ENCODE measurements at regions of chrX and their contacts with region 1.

Region 1: GRCh38 chrX:13051529-13052172 is 7.2 kb upstream of the FAM9C start:
- DNase-seq: peak in 13 of 14 experiments; percentile 30 to 77 (median 55)
- ATAC-seq: peak; percentile 83
- H3K4me3 ChIP-seq: no peak overlapping the region
- H3K4me3 Mint-ChIP-seq: peak overlapping the region; percentile 81
- H3K27ac ChIP-seq: peak overlapping the region; percentile 63 to 78
- H3K27ac Mint-ChIP-seq: peak overlapping the region; percentile 98
- H3K4me1 ChIP-seq: peaks cover 53% of the 10 kb centered on the region
- H3K4me1 Mint-ChIP-seq: peaks cover 82% of the 10 kb centered on the region
- H3K27me3 ChIP-seq: no peaks in the 10 kb centered on the region
- H3K27me3 Mint-ChIP-seq: no peaks in the 10 kb centered on the region
- CTCF ChIP-seq: no peak

Region 2: GRCh38 chrX:12955882-12956703 is 95.6 kb before region 1 on chrX:
- CTCF ChIA-PET with region 1: no interaction called
- POLR2A ChIA-PET with region 1: interaction called, 19 read pairs
- intact Hi-C with region 1: no loop called
- DNase-seq: peak in 11 of 14 experiments; percentile 38 to 84 (median 61)
- ATAC-seq: peak; percentile 18
- H3K4me3 ChIP-seq: peak overlapping the region; percentile 47
- H3K4me3 Mint-ChIP-seq: peak overlapping the region; percentile 89
- H3K27ac ChIP-seq: peak overlapping the region; percentile 87 to 89
- H3K27ac Mint-ChIP-seq: peak overlapping the region; percentile 95
- H3K4me1 ChIP-seq: peaks cover 80% of the 10 kb centered on the region
- H3K4me1 Mint-ChIP-seq: peaks cover 87% of the 10 kb centered on the region
- H3K27me3 ChIP-seq: no peaks in the 10 kb centered on the region
- H3K27me3 Mint-ChIP-seq: no peaks in the 10 kb centered on the region
- CTCF ChIP-seq: no peak

Region 3: GRCh38 chrX:13000301-13000811 is 51.3 kb before region 1 on chrX:
- CTCF ChIA-PET with region 1: no interaction called
- POLR2A ChIA-PET with region 1: interaction called, 23 read pairs
- intact Hi-C with region 1: no loop called
- DNase-seq: peak in 7 of 14 experiments; percentile 35 to 76 (median 60)
- ATAC-seq: peak; percentile 47
- H3K4me3 ChIP-seq: peak overlapping the region; percentile 37
- H3K4me3 Mint-ChIP-seq: peak overlapping the region; percentile 89
- H3K27ac ChIP-seq: peak overlapping the region; percentile 72 to 85
- H3K27ac Mint-ChIP-seq: peak overlapping the region; percentile 90
- H3K4me1 ChIP-seq: peaks cover 56% of the 10 kb centered on the region
- H3K4me1 Mint-ChIP-seq: peaks cover 83% of the 10 kb centered on the region
- H3K27me3 ChIP-seq: no peaks in the 10 kb centered on the region
- H3K27me3 Mint-ChIP-seq: no peaks in the 10 kb centered on the region
- CTCF ChIP-seq: no peak

Region 4: GRCh38 chrX:13013363-13014110 is 38.1 kb before region 1 on chrX:
- CTCF ChIA-PET with region 1: interaction called, 5 read pairs
- POLR2A ChIA-PET with region 1: interaction called, 19 read pairs
- intact Hi-C with region 1: loop called in 1 of 2 experiments (anchors 5 kb)
- DNase-seq: peak in 7 of 14 experiments; percentile 8 to 66 (median 43)
- ATAC-seq: peak; percentile 84
- H3K4me3 ChIP-seq: peak overlapping the region; percentile 9
- H3K4me3 Mint-ChIP-seq: peak overlapping the region; percentile 68
- H3K27ac ChIP-seq: peak overlapping the region; percentile 63 to 66
- H3K27ac Mint-ChIP-seq: peak overlapping the region; percentile 88
- H3K4me1 ChIP-seq: peaks cover 45% of the 10 kb centered on the region
- H3K4me1 Mint-ChIP-seq: peaks cover 76% of the 10 kb centered on the region
- H3K27me3 ChIP-seq: no peaks in the 10 kb centered on the region
- H3K27me3 Mint-ChIP-seq: no peaks in the 10 kb centered on the region
- CTCF ChIP-seq: no peak

Region 5: GRCh38 chrX:13029341-13029740 is 22.3 kb before region 1 on chrX:
- CTCF ChIA-PET with region 1: interaction called, 4 read pairs
- POLR2A ChIA-PET with region 1: interaction called, 85 read pairs
- intact Hi-C with region 1: no loop called
- DNase-seq: peak in 7 of 14 experiments; percentile 9 to 56 (median 40)
- ATAC-seq: peak; percentile 42
- H3K4me3 ChIP-seq: no peak overlapping the region
- H3K4me3 Mint-ChIP-seq: peak overlapping the region; percentile 70
- H3K27ac ChIP-seq: peak overlapping the region; percentile 19 to 52
- H3K27ac Mint-ChIP-seq: peak overlapping the region; percentile 98
- H3K4me1 ChIP-seq: peaks cover 53% of the 10 kb centered on the region
- H3K4me1 Mint-ChIP-seq: peaks cover 83% of the 10 kb centered on the region
- H3K27me3 ChIP-seq: no peaks in the 10 kb centered on the region
- H3K27me3 Mint-ChIP-seq: no peaks in the 10 kb centered on the region
- CTCF ChIP-seq: no peak

Region 6: DNA sequence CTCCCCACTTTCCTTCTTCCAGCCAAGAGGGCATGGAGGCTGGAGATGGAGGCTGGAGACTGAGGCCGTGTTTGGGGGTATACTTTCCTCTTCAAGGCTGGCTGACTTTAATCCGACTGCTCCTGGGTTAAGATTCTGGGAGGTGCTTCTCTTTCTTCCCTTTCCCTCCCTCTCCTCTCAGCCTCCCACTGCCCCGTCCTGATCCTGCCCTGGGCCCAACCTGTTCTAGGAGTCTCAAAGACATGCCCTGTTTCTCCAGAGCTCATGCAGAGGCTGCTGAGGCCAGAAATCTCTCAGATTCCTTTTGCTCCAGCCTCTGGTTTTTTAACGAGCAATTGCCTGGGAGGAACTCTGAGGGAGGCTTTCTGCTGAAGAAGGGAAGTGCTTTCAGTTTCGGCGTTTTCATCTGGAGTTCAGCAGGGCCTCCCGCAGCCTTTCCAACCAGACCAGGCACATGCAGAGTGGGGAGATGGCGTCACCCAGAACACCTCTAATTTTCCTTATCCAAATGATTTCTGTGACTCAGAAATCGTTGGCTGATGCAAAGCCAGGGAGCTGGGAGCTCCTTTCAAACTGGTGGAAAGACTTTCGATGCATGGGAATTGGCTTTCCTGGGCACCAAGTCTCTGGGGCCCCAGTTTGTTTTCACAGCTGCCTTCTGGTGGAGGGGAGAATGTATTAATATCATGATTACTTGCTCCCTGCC is 27.2 kb after region 1 on chrX:
- CTCF ChIA-PET with region 1: interaction called, 6 read pairs
- POLR2A ChIA-PET with region 1: interaction called, 239 read pairs
- intact Hi-C with region 1: loop called (anchors 2 kb)
- DNase-seq: peak in 4 of 14 experiments; percentile 34 to 56 (median 48)
- ATAC-seq: no peak
- H3K4me3 ChIP-seq: peak overlapping the region; percentile 28
- H3K4me3 Mint-ChIP-seq: peak overlapping the region; percentile 62
- H3K27ac ChIP-seq: peak overlapping the region; percentile 62
- H3K27ac Mint-ChIP-seq: peak overlapping the region; percentile 95
- H3K4me1 ChIP-seq: peaks cover 76% of the 10 kb centered on the region
- H3K4me1 Mint-ChIP-seq: peaks cover 96% of the 10 kb centered on the region
- H3K27me3 ChIP-seq: no peaks in the 10 kb centered on the region
- H3K27me3 Mint-ChIP-seq: no peaks in the 10 kb centered on the region
- CTCF ChIP-seq: no peak

Region 7: GRCh38 chrX:13837290-13837745 is 785.7 kb after region 1 on chrX:
- CTCF ChIA-PET with region 1: no interaction called
- POLR2A ChIA-PET with region 1: no interaction called
- intact Hi-C with region 1: no loop called
- DNase-seq: no peak
- ATAC-seq: no peak
- H3K4me3 ChIP-seq: no peak overlapping the region
- H3K4me3 Mint-ChIP-seq: no peak overlapping the region
- H3K27ac ChIP-seq: no peak overlapping the region
- H3K27ac Mint-ChIP-seq: no peak overlapping the region
- H3K4me1 ChIP-seq: no peaks in the 10 kb centered on the region
- H3K4me1 Mint-ChIP-seq: no peaks in the 10 kb centered on the region
- H3K27me3 ChIP-seq: no peaks in the 10 kb centered on the region
- H3K27me3 Mint-ChIP-seq: no peaks in the 10 kb centered on the region
- CTCF ChIP-seq: no peak